H1 (cell line): ENCODE measurements at regions of chr11 and their contacts with region 1.

Region 1: DNA sequence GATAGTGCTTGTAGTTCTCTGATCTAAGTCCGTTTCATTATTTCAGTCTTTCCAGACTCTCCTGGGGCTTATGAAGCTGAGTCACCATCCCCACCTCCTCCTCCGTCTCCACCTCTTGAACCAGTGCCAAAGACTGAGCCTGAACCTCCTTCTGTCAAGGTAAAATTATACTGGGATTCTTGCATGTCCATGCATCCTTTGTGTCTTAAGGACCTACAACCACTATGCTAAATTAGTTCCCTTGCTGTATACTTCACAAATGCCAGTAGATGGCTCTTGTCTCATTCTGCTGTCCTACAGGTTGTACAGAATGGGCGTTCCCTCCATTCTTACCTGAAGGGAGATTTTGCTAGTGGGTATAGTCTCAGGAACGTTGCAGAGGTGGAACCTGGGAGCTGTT is 42.2 kb downstream of the POLD3 start:
- DNase-seq: no peak
- H3K4me3 ChIP-seq: no peak overlapping the region
- H3K27ac ChIP-seq: no peak overlapping the region
- H3K4me1 ChIP-seq: no peaks in the 10 kb centered on the region
- H3K27me3 ChIP-seq: no peaks in the 10 kb centered on the region
- CTCF ChIP-seq: peak in 2 of 3 experiments; percentile 11 to 27; a peak in 2 of 4 replicates
- EP300 ChIP-seq: no peak
- POLR2A ChIP-seq: no peak
- RAD21 ChIP-seq: peak; percentile 38 to 48; a peak in 3 of 4 replicates

Region 2: GRCh38 chr11:74647404-74647803 is 12.9 kb after region 1 on chr11:
- CTCF ChIA-PET with region 1: interaction called, 11 read pairs
- POLR2A ChIA-PET with region 1: no interaction called
- DNase-seq: no peak
- H3K4me3 ChIP-seq: no peak overlapping the region
- H3K27ac ChIP-seq: no peak overlapping the region
- H3K4me1 ChIP-seq: peaks cover 0 to 5% (median 2%) of the 10 kb centered on the region in 4 experiments; a peak in 1 of 7 replicates
- H3K27me3 ChIP-seq: no peaks in the 10 kb centered on the region
- CTCF ChIP-seq: no peak
- EP300 ChIP-seq: no peak
- POLR2A ChIP-seq: no peak
- RAD21 ChIP-seq: no peak

Region 3: GRCh38 chr11:74671520-74672196 is 37.1 kb after region 1 on chr11:
- CTCF ChIA-PET with region 1: no interaction called
- POLR2A ChIA-PET with region 1: no interaction called
- DNase-seq: peak in 1 of 2 experiments; percentile 35
- H3K4me3 ChIP-seq: no peak overlapping the region
- H3K27ac ChIP-seq: no peak overlapping the region
- H3K4me1 ChIP-seq: no peaks in the 10 kb centered on the region
- H3K27me3 ChIP-seq: no peaks in the 10 kb centered on the region
- CTCF ChIP-seq: no peak
- EP300 ChIP-seq: no peak
- POLR2A ChIP-seq: no peak
- RAD21 ChIP-seq: no peak

Region 4: DNA sequence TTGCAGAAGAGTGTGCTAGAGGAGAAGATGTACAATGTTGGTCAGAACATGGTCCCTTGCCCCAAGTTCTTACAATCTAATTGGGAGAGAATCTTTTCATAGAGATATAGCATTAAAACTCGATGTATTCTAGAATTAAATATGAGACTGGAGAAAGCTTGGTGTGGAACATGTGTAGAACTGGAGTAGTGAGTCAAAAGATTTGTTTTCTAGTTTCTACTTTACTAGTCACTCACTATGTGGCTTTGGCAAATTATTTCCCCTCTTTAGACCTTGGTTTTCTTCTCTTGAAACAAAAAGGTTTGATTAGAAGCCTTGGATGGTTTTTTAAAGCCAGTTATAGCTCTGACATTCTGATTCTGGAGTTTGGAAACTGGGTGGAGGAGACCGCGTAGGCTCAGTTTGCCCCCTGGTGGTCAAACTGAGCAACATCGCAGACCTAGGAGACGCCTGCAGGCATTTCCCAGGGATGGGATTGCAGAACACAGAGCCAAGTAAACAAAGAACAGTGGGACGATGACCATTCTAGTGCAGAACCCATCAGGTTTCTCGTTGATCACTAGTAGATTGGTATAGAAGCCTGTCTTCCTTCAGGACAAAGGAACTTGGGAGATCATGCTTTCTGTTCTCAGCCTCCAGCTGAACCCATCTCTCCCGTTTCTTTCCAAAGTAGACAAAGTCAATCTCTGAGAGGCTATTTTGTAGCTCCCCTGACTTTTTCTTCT is 105.2 kb after region 1 on chr11:
- CTCF ChIA-PET with region 1: interaction called, 13 read pairs
- POLR2A ChIA-PET with region 1: no interaction called
- DNase-seq: peak in 1 of 2 experiments; percentile 46
- H3K4me3 ChIP-seq: no peak overlapping the region
- H3K27ac ChIP-seq: no peak overlapping the region
- H3K4me1 ChIP-seq: no peaks in the 10 kb centered on the region
- H3K27me3 ChIP-seq: no peaks in the 10 kb centered on the region; a peak in 1 of 7 replicates
- CTCF ChIP-seq: peak; percentile 80 to 88 (median 86)
- EP300 ChIP-seq: no peak
- POLR2A ChIP-seq: no peak
- RAD21 ChIP-seq: peak; percentile 67 to 83